Aorta (tissue), 5 donors: ENCODE measurements at regions of chr3 and their contacts with region 1.

Region 1: GRCh38 chr3:174153871-174154270 is 705.3 kb upstream of the NAALADL2 start:
- DNase-seq: no peak
- ATAC-seq: no peak
- H3K4me3 ChIP-seq: no peak overlapping the region
- H3K27ac ChIP-seq: peak overlapping the region in 1 of 2 donors; percentile 76
- H3K4me1 ChIP-seq: no peaks in the 10 kb centered on the region
- H3K27me3 ChIP-seq: no peaks in the 10 kb centered on the region

Region 2: GRCh38 chr3:172856766-172857742 is 1296.8 kb before region 1 on chr3:
- intact Hi-C with region 1: loop called in 1 of 2 experiments (anchors 10 kb)
- DNase-seq: no peak
- ATAC-seq: peak; percentile 64
- H3K4me3 ChIP-seq: no peak overlapping the region
- H3K27ac ChIP-seq: no peak overlapping the region
- H3K4me1 ChIP-seq: no peaks in the 10 kb centered on the region
- H3K27me3 ChIP-seq: no peaks in the 10 kb centered on the region

Region 3: DNA sequence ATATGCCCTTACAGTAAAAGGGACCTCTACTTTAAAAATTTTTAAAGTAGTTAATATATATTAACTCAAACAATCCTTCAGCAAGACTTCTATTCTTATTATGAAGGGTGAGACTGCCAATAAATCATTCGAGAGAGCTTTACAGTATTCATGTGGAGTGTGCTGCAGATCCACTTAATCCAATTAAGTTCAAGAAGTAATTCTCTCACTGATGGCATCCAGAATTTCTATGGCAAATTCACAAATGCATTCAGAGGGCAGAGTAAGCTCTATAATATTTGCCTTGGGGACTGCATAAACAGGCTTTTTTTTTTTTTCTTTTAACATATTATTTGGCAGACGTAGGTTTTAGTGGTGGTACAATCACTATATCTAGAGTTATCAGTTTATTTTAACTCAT is 64.3 kb before region 1 on chr3:
- intact Hi-C with region 1: no loop called
- DNase-seq: no peak
- ATAC-seq: no peak
- H3K4me3 ChIP-seq: no peak overlapping the region
- H3K27ac ChIP-seq: no peak overlapping the region
- H3K4me1 ChIP-seq: peaks cover 0 to 4% of the 10 kb centered on the region in 2 donors
- H3K27me3 ChIP-seq: no peaks in the 10 kb centered on the region

Region 4: GRCh38 chr3:174101244-174101643 is 52.6 kb before region 1 on chr3:
- intact Hi-C with region 1: no loop called
- DNase-seq: no peak
- ATAC-seq: no peak
- H3K4me3 ChIP-seq: no peak overlapping the region
- H3K27ac ChIP-seq: no peak overlapping the region
- H3K4me1 ChIP-seq: no peaks in the 10 kb centered on the region
- H3K27me3 ChIP-seq: no peaks in the 10 kb centered on the region

Region 5: DNA sequence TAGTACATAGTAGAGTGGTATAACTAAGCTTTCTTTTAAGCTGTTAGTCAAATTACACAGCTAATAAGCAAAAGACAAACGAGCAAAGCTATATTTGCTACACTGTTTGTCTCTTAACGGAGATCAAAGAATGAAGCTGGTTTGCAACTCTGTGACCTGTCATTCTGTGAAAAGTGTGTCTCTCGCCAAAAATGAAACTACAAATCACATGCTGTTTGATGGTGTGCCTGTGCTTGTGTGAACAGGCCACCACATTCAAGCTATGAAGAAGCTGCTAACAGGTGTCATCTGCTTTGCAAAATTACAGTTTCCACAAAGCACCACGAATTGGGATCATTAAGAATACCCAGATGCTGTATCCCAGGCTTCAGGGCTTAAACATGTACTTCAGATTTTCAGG is 37.5 kb after region 1 on chr3:
- intact Hi-C with region 1: loop called in 1 of 2 experiments (anchors 5 kb)
- DNase-seq: no peak
- ATAC-seq: no peak
- H3K4me3 ChIP-seq: no peak overlapping the region
- H3K27ac ChIP-seq: no peak overlapping the region
- H3K4me1 ChIP-seq: no peaks in the 10 kb centered on the region
- H3K27me3 ChIP-seq: no peaks in the 10 kb centered on the region